ENCODE measurements at regions of chr10 and their contacts with region 1.

Region 1: GRCh38 chr10:21462651-21463050 is 62.8 kb downstream of the SKIDA1 start:
- DNase-seq: no peak
- H3K27ac ChIP-seq: no peak overlapping the region
- CTCF ChIP-seq: no peak

Region 2: GRCh38 chr10:21449288-21449966 is 13.2 kb before region 1 on chr10:
- CTCF ChIA-PET with region 1: no interaction called
- POLR2A ChIA-PET with region 1: interaction called, 10 read pairs
- DNase-seq: no peak
- H3K27ac ChIP-seq: no peak overlapping the region
- CTCF ChIP-seq: no peak

Region 3: DNA sequence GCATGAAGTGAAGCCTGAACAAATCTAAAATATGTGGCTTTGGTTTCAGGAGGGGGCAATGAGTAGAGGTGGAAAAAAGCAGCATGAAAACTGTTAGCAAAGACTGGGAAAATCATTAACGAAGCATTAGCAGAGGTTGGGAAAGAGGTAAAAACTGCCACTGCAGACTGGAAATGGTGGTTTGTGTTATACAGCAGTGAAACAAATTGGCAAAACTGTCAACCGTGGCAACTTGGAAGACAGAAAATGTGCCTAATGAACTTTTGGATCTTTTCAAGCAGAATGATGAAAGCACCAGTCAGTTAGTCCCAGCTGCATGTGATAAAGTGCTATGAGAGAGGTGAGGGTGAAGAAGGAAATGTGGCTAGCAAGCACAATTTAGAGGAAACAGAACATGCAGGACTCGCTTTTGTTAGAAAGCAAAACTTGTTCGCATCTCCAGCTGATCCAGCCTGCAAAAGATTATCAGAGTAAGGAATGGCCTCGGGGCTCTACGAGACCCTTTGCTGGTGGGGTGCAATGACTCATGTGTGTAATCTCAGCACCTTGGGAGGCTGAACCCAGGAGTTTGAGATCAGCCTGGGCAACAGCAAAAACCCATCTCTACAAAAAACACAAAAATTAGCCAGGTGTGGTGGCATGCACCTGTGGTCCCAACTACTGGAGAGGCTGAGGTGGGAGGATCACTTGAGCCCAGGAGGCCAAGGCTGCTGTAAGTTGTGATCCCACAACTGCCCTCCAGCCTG is 17.1 kb after region 1 on chr10:
- CTCF ChIA-PET with region 1: no interaction called
- POLR2A ChIA-PET with region 1: no interaction called
- DNase-seq: no peak
- H3K27ac ChIP-seq: no peak overlapping the region
- CTCF ChIP-seq: no peak